GM18951 (cell line): ENCODE measurements at regions of chr5 and their contacts with region 1.

Region 1: DNA sequence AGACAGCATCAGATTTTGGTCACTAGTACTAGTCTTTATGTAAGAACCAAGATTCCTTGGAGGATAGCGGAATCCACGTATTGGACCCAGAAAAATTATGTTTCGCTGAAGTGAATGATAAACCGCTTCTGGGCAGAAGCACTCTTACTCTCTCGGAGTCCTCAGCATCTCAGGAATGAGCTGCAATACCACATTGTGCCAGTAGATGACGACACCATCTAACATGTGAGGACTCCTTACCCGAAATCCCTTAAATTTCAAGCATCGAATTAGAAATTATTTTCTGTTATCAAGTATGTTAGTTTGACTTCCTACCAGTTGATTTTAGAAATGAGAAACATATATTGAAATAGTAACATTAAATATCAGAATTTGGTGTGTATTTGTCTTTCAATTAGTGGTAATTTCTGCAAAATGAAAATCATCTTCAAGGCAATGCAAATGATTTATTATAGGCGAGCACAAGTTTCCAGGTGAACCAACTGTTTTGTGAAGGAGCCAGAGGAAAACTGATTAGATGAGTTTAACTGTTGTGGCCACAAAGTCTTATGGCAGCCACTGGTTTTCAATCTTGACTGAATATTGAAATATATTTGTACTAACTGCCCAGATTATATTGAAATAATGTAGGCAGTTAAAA is 66.0 kb upstream of the CAMK4 start:
- POLR2A ChIP-seq: no peak

Region 2: DNA sequence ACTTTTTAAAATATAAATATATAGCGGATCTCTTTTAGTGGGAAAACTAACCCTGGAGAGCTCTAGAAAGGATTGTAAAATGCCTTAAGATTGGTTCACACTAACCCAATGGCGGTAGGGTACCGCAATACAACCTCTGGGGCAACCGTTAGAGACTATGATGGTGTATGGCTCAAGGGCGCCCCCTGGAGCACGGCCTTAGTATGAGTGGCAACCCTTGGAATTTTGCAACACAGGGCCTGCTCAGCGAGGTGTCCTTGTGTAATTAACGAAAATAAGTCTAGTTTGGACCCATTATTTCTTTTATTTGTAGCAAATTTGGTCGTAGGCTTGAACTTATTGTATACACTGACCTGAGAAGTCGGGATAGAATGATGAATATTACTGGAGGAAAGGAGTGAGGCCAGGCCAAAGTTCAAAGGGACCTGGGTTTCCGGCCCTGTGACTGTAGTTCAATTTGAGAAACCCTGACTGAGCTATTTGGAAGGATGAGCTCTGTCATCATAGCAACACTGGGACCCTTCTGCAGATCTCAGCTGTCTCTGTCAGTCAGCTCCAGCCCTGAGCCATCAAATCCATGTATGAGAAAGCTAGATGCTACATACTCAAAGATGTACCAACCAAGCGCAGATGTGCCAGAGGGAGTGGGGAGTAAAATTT is 120.8 kb after region 1 on chr5:
- in situ Hi-C with region 1: loop called (anchors 5 kb)
- POLR2A ChIP-seq: no peak

Region 3: DNA sequence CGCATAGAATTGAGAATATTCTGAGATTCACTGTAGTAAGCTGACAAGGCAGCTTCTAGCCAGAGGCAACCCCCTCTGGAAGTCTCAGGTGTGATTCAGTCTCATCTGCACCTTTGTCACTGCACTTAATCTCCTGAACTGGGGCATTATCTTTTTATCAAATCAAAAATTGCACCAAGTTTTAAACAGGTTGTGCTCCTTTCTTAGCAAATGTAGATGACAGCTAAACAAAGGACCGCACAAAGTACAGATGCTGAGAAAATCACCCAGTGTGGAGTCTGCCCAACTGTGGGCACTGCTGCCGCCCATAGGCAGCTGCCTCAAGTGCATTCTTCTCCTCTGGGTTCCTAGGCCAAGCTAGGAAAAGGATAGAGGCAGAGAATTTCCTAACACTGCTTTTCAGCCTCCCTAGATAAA is 303.0 kb after region 1 on chr5:
- in situ Hi-C with region 1: loop called (anchors 25 kb)
- POLR2A ChIP-seq: no peak